ENCODE measurements at regions of chr17 and their contacts with region 1.

Region 1: GRCh38 chr17:45098869-45099616 is 33.3 kb downstream of the PLCD3 start:
- DNase-seq: peak; percentile 48 to 85 (median 74)
- ATAC-seq: peak; percentile 86
- H3K4me3 ChIP-seq: no peak overlapping the region
- H3K4me3 Mint-ChIP-seq: no peak overlapping the region
- H3K27ac ChIP-seq: no peak overlapping the region
- H3K27ac Mint-ChIP-seq: no peak overlapping the region
- H3K4me1 ChIP-seq: no peaks in the 10 kb centered on the region
- H3K4me1 Mint-ChIP-seq: no peaks in the 10 kb centered on the region
- H3K27me3 ChIP-seq: no peaks in the 10 kb centered on the region
- H3K27me3 Mint-ChIP-seq: no peaks in the 10 kb centered on the region
- CTCF ChIP-seq: peak; percentile 83

Region 2: GRCh38 chr17:44919885-44920564 is 179.0 kb before region 1 on chr17:
- CTCF ChIA-PET with region 1: interaction called, 17 read pairs
- POLR2A ChIA-PET with region 1: interaction called, 6 read pairs
- intact Hi-C with region 1: loop called in 1 of 2 experiments (anchors 1 kb)
- DNase-seq: peak; percentile 19 to 70 (median 52)
- ATAC-seq: peak; percentile 91
- H3K4me3 ChIP-seq: no peak overlapping the region
- H3K4me3 Mint-ChIP-seq: no peak overlapping the region
- H3K27ac ChIP-seq: no peak overlapping the region
- H3K27ac Mint-ChIP-seq: no peak overlapping the region
- H3K4me1 ChIP-seq: no peaks in the 10 kb centered on the region
- H3K4me1 Mint-ChIP-seq: no peaks in the 10 kb centered on the region
- H3K27me3 ChIP-seq: peaks cover 4% of the 10 kb centered on the region in 2 experiments
- H3K27me3 Mint-ChIP-seq: peaks cover 11% of the 10 kb centered on the region
- CTCF ChIP-seq: peak; percentile 32

Region 3: DNA sequence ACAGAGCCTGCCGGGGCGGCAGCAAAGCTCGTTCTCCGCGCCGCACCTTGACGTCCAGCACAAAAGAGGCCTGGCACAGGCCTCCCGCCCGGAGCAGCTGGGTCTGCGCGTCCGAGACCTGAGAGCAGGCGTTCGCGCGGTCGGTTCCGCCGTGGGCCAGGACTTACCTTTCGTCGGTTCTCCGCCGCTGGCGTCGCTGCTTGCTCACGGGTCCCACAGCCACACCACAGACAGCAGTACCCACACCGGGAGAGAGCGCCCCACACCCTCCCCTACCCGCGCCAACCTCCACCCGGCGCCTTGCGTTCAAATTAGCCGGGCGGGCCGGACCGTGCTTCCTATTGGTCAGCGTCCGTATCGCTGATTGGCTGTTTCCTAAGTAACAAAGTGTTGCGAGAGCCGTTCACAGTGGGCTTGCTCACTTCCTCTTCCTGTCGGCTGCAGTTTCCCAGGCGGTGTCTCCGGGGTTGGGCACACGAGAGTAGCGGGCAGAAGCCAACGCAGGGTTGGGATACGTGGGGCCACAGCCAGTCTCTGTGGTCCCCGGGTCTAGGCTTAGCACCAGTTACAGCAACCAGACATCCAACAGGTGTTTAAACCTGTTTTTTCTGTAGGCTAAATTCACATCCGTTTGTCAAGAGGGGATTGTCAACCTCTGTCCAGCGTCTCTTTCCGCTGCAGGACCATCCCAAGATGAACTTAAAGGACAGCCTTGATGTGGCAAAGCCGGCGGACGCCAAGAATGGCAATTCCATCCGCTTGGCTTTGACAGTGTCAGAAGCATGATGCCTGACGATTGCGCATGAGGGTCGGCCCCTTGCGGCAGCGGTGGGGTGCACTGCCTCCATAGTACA is 151.4 kb before region 1 on chr17 and contains the start of gene KIF18B:
- CTCF ChIA-PET with region 1: no interaction called
- POLR2A ChIA-PET with region 1: no interaction called
- intact Hi-C with region 1: loop called in 1 of 2 experiments (anchors 1 kb)
- DNase-seq: peak; percentile 72 to 94 (median 87)
- ATAC-seq: peak; percentile 97
- H3K4me3 ChIP-seq: peak within 1 kb of the TSS; percentile 57 to 68
- H3K4me3 Mint-ChIP-seq: peak within 1 kb of the TSS; percentile 93
- H3K27ac ChIP-seq: peak within 1 kb of the TSS; percentile 47 to 67
- H3K27ac Mint-ChIP-seq: peak within 1 kb of the TSS; percentile 93
- H3K4me1 ChIP-seq: peaks cover 9% of the 10 kb centered on the region
- H3K4me1 Mint-ChIP-seq: peaks cover 13% of the 10 kb centered on the region
- H3K27me3 ChIP-seq: peaks cover 0 to 5% of the 10 kb centered on the region in 2 experiments
- H3K27me3 Mint-ChIP-seq: peaks cover 5% of the 10 kb centered on the region
- CTCF ChIP-seq: no peak
- total RNA-seq, gene KIF18B: 0.11 TPM in 1 of 2 experiments, not detected in the other

Region 4: GRCh38 chr17:45021607-45022287 is 77.3 kb before region 1 on chr17:
- CTCF ChIA-PET with region 1: interaction called, 15 read pairs
- POLR2A ChIA-PET with region 1: no interaction called
- intact Hi-C with region 1: loop called in 1 of 2 experiments (anchors 1 kb)
- DNase-seq: peak; percentile 35 to 82 (median 61)
- ATAC-seq: peak; percentile 87
- H3K4me3 ChIP-seq: peak overlapping the region; percentile 40 to 42
- H3K4me3 Mint-ChIP-seq: peak overlapping the region; percentile 59
- H3K27ac ChIP-seq: no peak overlapping the region
- H3K27ac Mint-ChIP-seq: no peak overlapping the region
- H3K4me1 ChIP-seq: peaks cover 20% of the 10 kb centered on the region
- H3K4me1 Mint-ChIP-seq: peaks cover 21% of the 10 kb centered on the region
- H3K27me3 ChIP-seq: peaks cover 20 to 21% of the 10 kb centered on the region in 2 experiments
- H3K27me3 Mint-ChIP-seq: peaks cover 37% of the 10 kb centered on the region
- CTCF ChIP-seq: peak; percentile 90

Region 5: GRCh38 chr17:45051060-45051719 is 47.9 kb before region 1 on chr17 and contains the start of gene DCAKD:
- CTCF ChIA-PET with region 1: interaction called, 14 read pairs
- POLR2A ChIA-PET with region 1: no interaction called
- intact Hi-C with region 1: no loop called
- DNase-seq: peak; percentile 76 to 97 (median 85)
- ATAC-seq: peak; percentile 90
- H3K4me3 ChIP-seq: peak within 1 kb of the TSS; percentile 61 to 82
- H3K4me3 Mint-ChIP-seq: peak within 1 kb of the TSS; percentile 86
- H3K27ac ChIP-seq: peak within 1 kb of the TSS; percentile 78 to 95
- H3K27ac Mint-ChIP-seq: peak within 1 kb of the TSS; percentile 94
- H3K4me1 ChIP-seq: peaks cover 29% of the 10 kb centered on the region
- H3K4me1 Mint-ChIP-seq: peaks cover 36% of the 10 kb centered on the region
- H3K27me3 ChIP-seq: no peaks in the 10 kb centered on the region
- H3K27me3 Mint-ChIP-seq: no peaks in the 10 kb centered on the region
- CTCF ChIP-seq: no peak
- total RNA-seq, gene DCAKD: 8.3 to 8.4 TPM

Region 6: GRCh38 chr17:45197555-45198334 is 98.7 kb after region 1 on chr17:
- CTCF ChIA-PET with region 1: interaction called, 12 read pairs
- POLR2A ChIA-PET with region 1: no interaction called
- intact Hi-C with region 1: no loop called
- DNase-seq: peak; percentile 75 to 93 (median 86)
- ATAC-seq: peak; percentile 100
- H3K4me3 ChIP-seq: no peak overlapping the region
- H3K4me3 Mint-ChIP-seq: no peak overlapping the region
- H3K27ac ChIP-seq: no peak overlapping the region
- H3K27ac Mint-ChIP-seq: no peak overlapping the region
- H3K4me1 ChIP-seq: peaks cover 7% of the 10 kb centered on the region
- H3K4me1 Mint-ChIP-seq: peaks cover 4% of the 10 kb centered on the region
- H3K27me3 ChIP-seq: no peaks in the 10 kb centered on the region
- H3K27me3 Mint-ChIP-seq: no peaks in the 10 kb centered on the region
- CTCF ChIP-seq: peak; percentile 85

Measured in CD8-positive, alpha-beta T cell (primary cell).